HAP-1 (cell line): ENCODE measurements at regions of chr11 and their contacts with region 1.

Region 1: DNA sequence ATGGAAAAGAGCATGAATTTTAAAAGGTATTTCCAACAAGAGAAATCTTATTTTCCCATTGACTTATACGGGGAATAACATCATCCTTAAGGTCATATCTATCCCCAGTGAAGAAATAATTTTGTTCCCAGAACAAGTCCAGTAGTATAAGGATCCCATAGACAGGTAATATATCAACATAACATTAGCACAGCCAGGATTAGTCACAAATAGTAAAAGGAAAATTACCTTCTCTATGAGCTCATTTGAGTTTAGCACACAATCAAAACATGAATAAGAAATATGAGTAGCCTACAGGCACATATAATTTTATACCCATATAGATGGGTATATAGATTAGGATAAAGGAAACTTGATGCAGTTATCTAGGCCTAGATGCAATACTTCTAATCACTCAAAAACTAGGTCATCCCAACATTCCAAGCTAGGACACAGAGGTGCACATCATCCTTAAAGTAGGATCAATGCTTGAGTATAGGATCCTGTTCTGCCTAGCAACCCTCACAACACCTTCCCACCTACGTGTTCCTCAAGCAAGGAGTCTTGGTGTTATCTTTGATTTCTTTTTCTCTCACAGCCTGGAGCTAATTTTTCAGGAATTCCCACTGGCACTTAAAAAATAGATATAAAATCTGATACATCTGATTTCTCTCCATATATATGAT is 2.7 kb upstream of the OR52K1 start:
- DNase-seq: no peak
- H3K4me3 ChIP-seq: no peak overlapping the region
- H3K4me1 ChIP-seq: peaks cover 16% of the 10 kb centered on the region
- H3K27me3 ChIP-seq: no peaks in the 10 kb centered on the region

Region 2: DNA sequence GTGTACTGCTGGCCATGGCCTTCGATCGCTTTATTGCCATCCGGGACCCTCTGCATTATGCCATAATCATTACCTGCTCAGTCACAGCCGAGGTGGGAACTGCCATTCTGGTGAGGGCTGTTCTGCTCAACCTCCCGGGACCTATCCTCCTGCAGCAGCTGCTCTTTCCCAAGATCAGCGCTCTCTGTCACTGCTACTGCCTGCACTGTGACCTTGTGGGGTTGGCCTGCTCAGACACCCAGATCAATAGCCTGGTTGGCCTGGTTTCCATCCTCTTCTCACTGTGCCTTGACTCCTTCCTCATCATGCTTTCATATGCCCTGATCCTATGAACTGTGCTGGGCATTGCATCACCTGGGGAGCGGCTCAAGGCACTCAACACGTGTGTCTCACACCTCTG is 61.4 kb before region 1 on chr11:
- in situ Hi-C with region 1: loop called (anchors 10 kb)
- DNase-seq: no peak
- H3K4me3 ChIP-seq: no peak overlapping the region
- H3K4me1 ChIP-seq: no peaks in the 10 kb centered on the region
- H3K27me3 ChIP-seq: no peaks in the 10 kb centered on the region